ENCODE measurements at regions of chr2 and their contacts with region 1.

Region 1: DNA sequence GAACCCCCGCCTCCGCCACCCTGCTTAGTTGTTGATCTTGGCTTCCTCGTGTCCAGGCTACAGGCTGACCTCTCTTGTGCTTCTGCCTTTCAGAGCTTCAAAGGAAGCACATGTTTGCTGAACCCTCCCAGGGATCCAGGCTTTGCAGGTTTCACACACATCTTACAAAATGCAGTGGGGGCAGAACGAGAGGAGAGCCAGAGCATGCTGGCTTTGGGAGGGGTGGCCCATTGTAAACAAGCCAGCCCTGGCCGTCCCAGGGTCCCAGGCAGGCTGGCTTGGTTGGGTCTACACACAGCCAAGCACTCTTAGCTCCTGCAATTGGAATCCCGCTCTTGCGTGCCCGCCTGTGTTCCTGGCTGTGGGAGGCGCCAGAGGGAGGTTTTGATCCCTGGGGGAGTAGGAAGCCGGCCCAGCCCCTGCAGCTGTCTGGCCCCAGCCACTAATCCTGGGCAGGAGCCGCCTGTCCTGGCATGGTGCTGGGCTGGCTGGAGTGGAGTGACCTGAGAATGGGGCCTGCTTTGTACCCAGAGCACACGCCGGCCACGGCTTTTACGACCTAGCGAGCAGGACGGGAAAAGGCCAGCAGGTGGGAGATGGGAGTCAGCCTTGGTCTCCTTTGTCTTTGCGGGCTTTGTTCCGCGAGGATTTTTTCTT is 53.9 kb downstream of the SH3BP4 start:
- DNase-seq: peak in 4 of 5 donors; percentile 38 to 76 (median 67)
- ATAC-seq: peak; percentile 77 to 90 (median 86)
- H3K4me3 ChIP-seq: no peak overlapping the region
- H3K27ac ChIP-seq: peak overlapping the region in 2 of 12 donors; percentile 27 to 37
- H3K4me1 ChIP-seq: peaks cover 0 to 46% (median 20%) of the 10 kb centered on the region in 12 donors
- H3K27me3 ChIP-seq: no peaks in the 10 kb centered on the region
- CTCF ChIP-seq: peak in 8 of 12 donors; percentile 25 to 43 (median 36)
- POLR2A ChIP-seq: no peak

Region 2: DNA sequence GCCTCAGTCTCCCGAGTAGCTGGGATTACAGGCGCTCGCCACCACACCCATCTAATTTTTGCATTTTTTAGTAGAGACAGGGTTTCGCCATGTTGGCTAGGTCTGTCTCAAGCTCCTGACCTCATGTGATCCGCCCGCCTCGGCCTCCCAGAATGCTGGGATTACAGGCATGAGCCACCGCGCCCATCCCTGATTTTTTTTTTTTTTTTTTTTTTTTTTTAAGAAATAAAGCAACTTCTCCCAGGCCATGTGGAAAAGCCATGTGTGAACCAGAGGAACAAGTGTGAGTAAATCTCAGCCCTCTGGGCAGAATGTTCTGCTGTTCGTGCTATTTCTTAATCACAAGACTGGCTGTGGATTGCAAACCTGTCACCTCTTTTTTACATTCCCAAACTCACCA is 60.3 kb before region 1 on chr2:
- intact Hi-C with region 1: no loop called
- DNase-seq: no peak
- ATAC-seq: no peak
- H3K4me3 ChIP-seq: no peak overlapping the region
- H3K27ac ChIP-seq: no peak overlapping the region
- H3K4me1 ChIP-seq: no peaks in the 10 kb centered on the region
- H3K27me3 ChIP-seq: peaks cover 0 to 9% (median 0%) of the 10 kb centered on the region in 9 donors
- CTCF ChIP-seq: no peak
- POLR2A ChIP-seq: no peak

Region 3: GRCh38 chr2:235087812-235088495 is 82.2 kb after region 1 on chr2:
- intact Hi-C with region 1: loop called in 3 of 10 experiments (anchors 5 to 10 kb)
- DNase-seq: peak; percentile 61 to 81 (median 73)
- ATAC-seq: peak; percentile 61 to 77 (median 72)
- H3K4me3 ChIP-seq: peak overlapping the region in 9 of 12 donors; percentile 6 to 36 (median 29)
- H3K27ac ChIP-seq: peak overlapping the region in 11 of 12 donors; percentile 6 to 76 (median 47)
- H3K4me1 ChIP-seq: peaks cover 0 to 25% (median 3%) of the 10 kb centered on the region in 12 donors
- H3K27me3 ChIP-seq: no peaks in the 10 kb centered on the region
- CTCF ChIP-seq: peak in 4 of 12 donors; percentile 6 to 31 (median 20)
- POLR2A ChIP-seq: no peak

Region 4: DNA sequence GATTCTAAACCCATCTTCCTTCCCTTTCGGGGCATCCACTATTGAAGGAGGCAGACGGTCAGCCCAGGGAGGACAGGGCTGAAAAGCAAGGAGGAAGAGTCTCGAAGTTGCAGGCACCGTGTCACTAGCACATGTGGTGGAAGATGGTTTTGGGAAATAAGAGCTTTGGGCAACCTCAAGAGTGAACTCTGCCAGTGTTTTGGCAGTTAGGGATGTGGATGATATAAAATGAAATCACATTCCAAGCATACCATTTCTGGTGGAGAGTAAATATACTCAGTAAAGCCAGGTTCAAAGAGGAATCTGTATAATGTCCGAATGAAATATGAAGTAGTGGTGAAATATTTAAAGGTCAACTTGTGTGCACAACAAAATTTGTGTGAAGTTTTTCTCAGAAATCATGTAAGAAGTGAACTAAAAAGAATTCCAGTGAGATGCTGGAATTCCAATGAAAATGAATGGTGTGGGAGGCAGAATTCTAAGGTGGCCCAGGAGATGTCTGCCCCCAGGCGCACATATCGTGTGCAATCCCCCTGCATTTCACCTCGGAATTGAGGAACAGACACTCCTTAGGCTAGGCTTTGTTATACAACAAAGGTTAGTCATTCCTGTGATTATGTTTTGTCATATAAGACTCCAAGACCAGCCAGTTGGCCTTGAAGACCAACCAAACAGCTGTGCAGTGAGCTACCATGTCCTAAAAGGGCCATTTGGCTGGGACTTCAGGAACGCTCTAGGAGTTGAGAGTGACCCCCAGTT is 93.2 kb after region 1 on chr2:
- intact Hi-C with region 1: loop called in 5 of 10 experiments (anchors 5 to 10 kb)
- DNase-seq: no peak
- ATAC-seq: no peak
- H3K4me3 ChIP-seq: no peak overlapping the region
- H3K27ac ChIP-seq: no peak overlapping the region
- H3K4me1 ChIP-seq: peaks cover 0 to 7% (median 2%) of the 10 kb centered on the region in 12 donors
- H3K27me3 ChIP-seq: no peaks in the 10 kb centered on the region
- CTCF ChIP-seq: no peak
- POLR2A ChIP-seq: no peak

Region 5: GRCh38 chr2:235106874-235107639 is 101.3 kb after region 1 on chr2:
- intact Hi-C with region 1: loop called in 5 of 10 experiments (anchors 5 to 10 kb)
- DNase-seq: peak; percentile 54 to 71 (median 67)
- ATAC-seq: peak; percentile 55 to 87 (median 74)
- H3K4me3 ChIP-seq: no peak overlapping the region
- H3K27ac ChIP-seq: no peak overlapping the region
- H3K4me1 ChIP-seq: peaks cover 0 to 13% (median 2%) of the 10 kb centered on the region in 12 donors
- H3K27me3 ChIP-seq: no peaks in the 10 kb centered on the region
- CTCF ChIP-seq: peak; percentile 41 to 84 (median 74)
- POLR2A ChIP-seq: no peak

Region 6: DNA sequence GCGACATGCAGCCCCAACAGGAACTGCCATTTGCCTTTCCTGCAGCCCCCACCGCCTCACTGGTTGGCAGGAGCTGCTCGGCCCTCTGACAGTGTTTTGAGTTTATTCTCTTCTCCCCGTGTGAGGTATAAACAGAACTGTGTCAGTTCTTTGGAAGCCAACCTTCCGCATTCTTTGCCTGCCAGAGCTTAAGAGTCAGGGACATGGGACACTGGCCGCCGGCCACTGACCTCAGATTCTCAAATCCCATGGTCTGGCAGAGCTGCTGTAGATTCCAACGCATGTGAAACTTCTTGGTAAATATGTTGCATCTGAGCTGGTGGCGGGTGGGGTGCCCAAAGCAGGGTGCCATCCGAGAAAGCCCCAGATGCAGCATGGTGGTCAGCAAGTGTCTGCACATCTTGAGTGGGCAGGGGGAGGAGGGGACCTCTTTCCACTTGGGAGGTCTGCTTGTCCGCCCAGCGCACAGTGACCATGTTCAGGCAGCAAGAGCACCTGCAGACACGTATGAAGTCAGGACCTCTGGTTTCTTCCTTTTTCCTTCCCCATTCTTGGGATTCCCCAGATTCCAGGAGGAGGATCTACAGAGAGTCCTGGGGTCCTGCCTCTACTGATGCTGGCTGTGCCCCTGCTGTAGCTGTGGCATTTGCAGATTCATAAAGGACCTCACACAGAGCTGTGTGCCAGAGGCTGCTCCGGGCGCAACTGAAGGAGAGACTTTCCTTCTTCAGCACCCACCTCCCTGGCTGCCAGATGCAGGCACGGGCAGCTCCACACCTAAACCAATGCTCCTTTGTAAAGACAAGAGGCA is 1234.7 kb after region 1 on chr2:
- intact Hi-C with region 1: no loop called
- DNase-seq: peak in 4 of 5 donors; percentile 60 to 83 (median 68)
- ATAC-seq: peak; percentile 55 to 86 (median 78)
- H3K4me3 ChIP-seq: peak overlapping the region in 9 of 12 donors; percentile 5 to 52 (median 31)
- H3K27ac ChIP-seq: peak overlapping the region; percentile 77 to 96 (median 86)
- H3K4me1 ChIP-seq: peaks cover 0 to 57% (median 11%) of the 10 kb centered on the region in 12 donors
- H3K27me3 ChIP-seq: peaks cover 0 to 41% (median 11%) of the 10 kb centered on the region in 9 donors
- CTCF ChIP-seq: no peak
- POLR2A ChIP-seq: peak in 1 of 2 donors; percentile 42